PC-3 (cell line): ENCODE measurements at regions of chr2 and their contacts with region 1.

Region 1: GRCh38 chr2:133266041-133266925 is 302.0 kb downstream of the NCKAP5 start:
- DNase-seq: peak; percentile 28
- ATAC-seq: peak; percentile 29
- H3K4me3 ChIP-seq: peak overlapping the region; percentile 76
- H3K27ac ChIP-seq: peak overlapping the region; percentile 38
- H3K4me1 ChIP-seq: peaks cover 47% of the 10 kb centered on the region
- H3K27me3 ChIP-seq: no peaks in the 10 kb centered on the region
- CTCF ChIP-seq: peak; percentile 54; the same call in 1 of the 2 replicates

Region 2: GRCh38 chr2:132977812-132978529 is 288.3 kb before region 1 on chr2:
- CTCF ChIA-PET with region 1: interaction called, 10 read pairs
- POLR2A ChIA-PET with region 1: no interaction called
- intact Hi-C with region 1: no loop called
- DNase-seq: peak; percentile 50
- ATAC-seq: peak; percentile 55
- H3K4me3 ChIP-seq: no peak overlapping the region
- H3K27ac ChIP-seq: no peak overlapping the region
- H3K4me1 ChIP-seq: peaks cover 8% of the 10 kb centered on the region; the same call in 1 of the 2 replicates
- H3K27me3 ChIP-seq: no peaks in the 10 kb centered on the region
- CTCF ChIP-seq: no peak

Region 3: GRCh38 chr2:133293544-133294353 is 27.5 kb after region 1 on chr2:
- CTCF ChIA-PET with region 1: no interaction called
- POLR2A ChIA-PET with region 1: no interaction called
- intact Hi-C with region 1: no loop called
- DNase-seq: no peak
- ATAC-seq: no peak
- H3K4me3 ChIP-seq: no peak overlapping the region
- H3K27ac ChIP-seq: no peak overlapping the region
- H3K4me1 ChIP-seq: no peaks in the 10 kb centered on the region
- H3K27me3 ChIP-seq: no peaks in the 10 kb centered on the region
- CTCF ChIP-seq: no peak

Region 4: GRCh38 chr2:133324147-133324561 is 57.9 kb after region 1 on chr2:
- CTCF ChIA-PET with region 1: no interaction called
- POLR2A ChIA-PET with region 1: no interaction called
- intact Hi-C with region 1: loop called (anchors 2 kb)
- DNase-seq: peak; percentile 86
- ATAC-seq: peak; percentile 94
- H3K4me3 ChIP-seq: no peak overlapping the region
- H3K27ac ChIP-seq: peak overlapping the region; percentile 95
- H3K4me1 ChIP-seq: peaks cover 48% of the 10 kb centered on the region
- H3K27me3 ChIP-seq: no peaks in the 10 kb centered on the region
- CTCF ChIP-seq: no peak

Region 5: GRCh38 chr2:133641497-133641896 is 375.2 kb after region 1 on chr2:
- CTCF ChIA-PET with region 1: interaction called, 3 read pairs
- POLR2A ChIA-PET with region 1: no interaction called
- intact Hi-C with region 1: loop called (anchors 2 kb)
- DNase-seq: peak; percentile 98
- ATAC-seq: peak; percentile 94
- H3K4me3 ChIP-seq: peak overlapping the region; percentile 46; the same call in 1 of the 2 replicates
- H3K27ac ChIP-seq: peak overlapping the region; percentile 72
- H3K4me1 ChIP-seq: peaks cover 33% of the 10 kb centered on the region
- H3K27me3 ChIP-seq: no peaks in the 10 kb centered on the region
- CTCF ChIP-seq: peak; percentile 80

Region 6: DNA sequence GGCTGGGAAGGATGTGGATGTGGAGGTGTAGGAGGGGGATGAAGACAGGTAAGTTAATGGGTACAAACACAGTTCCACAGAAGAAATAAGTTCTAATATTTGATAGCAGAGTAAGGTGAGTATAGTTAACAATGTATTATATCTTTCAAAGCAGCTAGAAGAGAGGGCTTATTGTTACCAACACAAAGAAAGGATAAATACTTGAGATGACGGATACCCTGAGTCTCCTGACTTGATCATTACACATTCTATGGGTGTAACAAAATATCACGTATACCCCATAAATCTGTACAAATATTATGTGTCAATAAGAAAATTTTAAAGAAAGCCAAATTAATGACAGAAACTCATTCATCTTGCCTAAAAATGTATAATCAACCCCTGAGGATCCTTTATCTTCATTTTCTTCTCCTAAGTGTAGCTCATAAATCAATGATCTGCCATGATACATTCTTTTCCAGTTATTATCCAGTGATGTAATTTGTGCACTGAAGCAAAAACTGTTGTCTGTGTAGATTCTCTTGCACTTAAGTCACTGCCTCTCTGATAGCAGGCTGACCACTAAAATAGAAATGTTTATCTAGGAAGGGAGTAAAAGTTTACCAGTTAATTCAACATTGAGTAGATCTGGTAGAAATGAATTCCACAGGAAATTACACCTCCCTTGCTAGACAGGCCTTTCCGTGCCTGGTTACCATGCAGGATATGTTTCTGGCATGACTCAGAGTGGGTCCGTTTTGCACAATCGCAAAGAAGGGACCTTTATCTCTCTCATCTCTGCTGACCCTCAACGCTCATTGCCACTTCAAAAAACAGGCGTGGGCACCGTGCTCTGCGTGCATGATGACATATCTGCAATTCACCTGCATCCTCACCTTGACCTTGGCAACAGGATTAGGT is 551.6 kb after region 1 on chr2:
- CTCF ChIA-PET with region 1: no interaction called
- POLR2A ChIA-PET with region 1: no interaction called
- intact Hi-C with region 1: loop called (anchors 1 kb)
- DNase-seq: peak; percentile 97
- ATAC-seq: peak; percentile 84
- H3K4me3 ChIP-seq: no peak overlapping the region
- H3K27ac ChIP-seq: peak overlapping the region; percentile 95
- H3K4me1 ChIP-seq: peaks cover 64% of the 10 kb centered on the region
- H3K27me3 ChIP-seq: no peaks in the 10 kb centered on the region
- CTCF ChIP-seq: no peak

Region 7: DNA sequence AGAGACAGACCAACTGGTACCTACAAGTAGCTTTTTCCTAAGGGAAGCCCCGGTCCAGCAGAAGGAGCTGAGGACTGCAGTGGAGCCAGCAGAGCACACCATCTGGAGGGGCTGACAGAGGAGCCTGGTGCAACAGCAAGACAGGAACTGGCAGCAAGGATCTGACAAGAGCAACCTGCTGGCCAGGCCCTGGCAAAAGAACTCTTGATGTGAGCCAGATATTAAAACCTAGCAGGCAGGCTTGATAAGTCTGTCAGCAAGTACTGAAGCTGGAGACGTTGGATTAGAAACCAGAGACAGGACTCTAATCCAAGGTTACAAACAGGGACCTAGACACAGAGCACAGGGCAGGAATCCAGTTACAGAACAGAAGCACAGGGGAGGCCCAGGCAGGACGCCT is 726.9 kb after region 1 on chr2:
- CTCF ChIA-PET with region 1: no interaction called
- POLR2A ChIA-PET with region 1: no interaction called
- intact Hi-C with region 1: no loop called
- DNase-seq: no peak
- ATAC-seq: no peak
- H3K4me3 ChIP-seq: no peak overlapping the region
- H3K27ac ChIP-seq: no peak overlapping the region
- H3K4me1 ChIP-seq: no peaks in the 10 kb centered on the region
- H3K27me3 ChIP-seq: peaks cover 19% of the 10 kb centered on the region
- CTCF ChIP-seq: no peak